K562 (cell line): ENCODE measurements at regions of chr19 and their contacts with region 1.

Region 1: DNA sequence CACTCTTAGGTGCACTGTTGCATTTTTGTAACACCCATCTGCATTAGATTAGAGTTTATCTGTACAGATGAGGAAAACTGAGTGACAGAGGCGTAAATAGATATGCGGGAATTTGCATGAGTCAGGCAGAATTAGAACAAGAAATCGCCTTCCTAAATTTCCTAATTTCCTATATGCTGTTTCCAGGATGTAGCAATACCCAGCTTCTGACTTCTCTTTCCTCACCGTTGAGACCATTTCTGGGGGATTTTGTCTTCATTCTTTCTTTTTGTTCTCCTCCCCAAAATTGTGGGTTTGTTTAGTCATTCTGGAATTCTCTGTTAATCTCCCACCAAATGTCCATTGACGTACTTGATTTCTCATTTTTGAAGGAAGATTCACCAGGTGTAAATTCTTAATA is 10.6 kb upstream of the ZNF792 start:
- DNase-seq: no peak
- ATAC-seq: no peak
- H3K4me3 ChIP-seq: no peak overlapping the region
- H3K27ac ChIP-seq: no peak overlapping the region
- H3K4me1 ChIP-seq: peaks cover 17 to 23% of the 10 kb centered on the region in 2 experiments; a peak in 3 of 5 replicates
- H3K27me3 ChIP-seq: no peaks in the 10 kb centered on the region
- CTCF ChIP-seq: no peak
- EP300 ChIP-seq: no peak
- POLR2A ChIP-seq: no peak
- RAD21 ChIP-seq: no peak

Region 2: DNA sequence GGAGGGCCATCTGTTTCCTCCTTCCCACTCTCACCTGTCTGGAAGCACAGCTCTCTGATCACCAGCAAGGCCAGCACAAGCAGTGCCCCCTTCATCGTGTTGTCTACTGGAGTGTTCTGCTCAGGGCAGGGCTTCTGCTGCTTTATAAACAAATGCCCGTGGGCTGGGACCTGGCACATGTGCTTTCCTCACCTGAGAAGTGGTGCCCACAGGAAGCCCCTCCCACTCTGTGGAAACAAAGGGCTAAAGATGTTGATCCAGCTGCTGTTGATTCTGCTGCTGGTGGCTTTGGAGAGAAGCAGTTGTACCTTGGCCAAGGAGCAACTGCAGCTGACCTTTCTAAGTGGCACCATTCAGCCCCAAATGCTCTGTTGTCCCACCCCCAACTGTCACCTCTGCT is 267.0 kb before region 1 on chr19:
- CTCF ChIA-PET with region 1: no interaction called
- POLR2A ChIA-PET with region 1: no interaction called
- in situ Hi-C with region 1: no loop called
- intact Hi-C with region 1: no loop called
- DNase-seq: no peak
- ATAC-seq: no peak
- H3K4me3 ChIP-seq: no peak overlapping the region
- H3K27ac ChIP-seq: no peak overlapping the region
- H3K4me1 ChIP-seq: no peaks in the 10 kb centered on the region; a peak in 1 of 5 replicates
- H3K27me3 ChIP-seq: 0 out of 5 replicates have a peak, but pooled peaks cover 0 to 4% of the 10 kb centered on the region in 2 experiments
- CTCF ChIP-seq: no peak
- EP300 ChIP-seq: no peak
- POLR2A ChIP-seq: no peak
- RAD21 ChIP-seq: no peak

Region 3: GRCh38 chr19:34838753-34839431 is 135.8 kb before region 1 on chr19:
- CTCF ChIA-PET with region 1: no interaction called
- POLR2A ChIA-PET with region 1: no interaction called
- in situ Hi-C with region 1: no loop called
- intact Hi-C with region 1: loop called (anchors 5 kb)
- DNase-seq: no peak
- ATAC-seq: peak; percentile 53; the same call in 2 of the 3 replicates
- H3K4me3 ChIP-seq: no peak overlapping the region
- H3K27ac ChIP-seq: no peak overlapping the region
- H3K4me1 ChIP-seq: peaks cover 8 to 10% of the 10 kb centered on the region in 2 experiments; a peak in 4 of 5 replicates
- H3K27me3 ChIP-seq: no peaks in the 10 kb centered on the region; a peak in 2 of 5 replicates
- CTCF ChIP-seq: no peak
- EP300 ChIP-seq: no peak
- POLR2A ChIP-seq: no peak
- RAD21 ChIP-seq: no peak

Region 4: GRCh38 chr19:34953092-34953491 is 21.6 kb before region 1 on chr19:
- CTCF ChIA-PET with region 1: no interaction called
- POLR2A ChIA-PET with region 1: no interaction called
- in situ Hi-C with region 1: no loop called
- intact Hi-C with region 1: no loop called
- DNase-seq: no peak
- ATAC-seq: no peak
- H3K4me3 ChIP-seq: no peak overlapping the region
- H3K27ac ChIP-seq: no peak overlapping the region
- H3K4me1 ChIP-seq: no peaks in the 10 kb centered on the region
- H3K27me3 ChIP-seq: no peaks in the 10 kb centered on the region
- CTCF ChIP-seq: no peak
- EP300 ChIP-seq: no peak
- POLR2A ChIP-seq: no peak
- RAD21 ChIP-seq: no peak

Region 5: DNA sequence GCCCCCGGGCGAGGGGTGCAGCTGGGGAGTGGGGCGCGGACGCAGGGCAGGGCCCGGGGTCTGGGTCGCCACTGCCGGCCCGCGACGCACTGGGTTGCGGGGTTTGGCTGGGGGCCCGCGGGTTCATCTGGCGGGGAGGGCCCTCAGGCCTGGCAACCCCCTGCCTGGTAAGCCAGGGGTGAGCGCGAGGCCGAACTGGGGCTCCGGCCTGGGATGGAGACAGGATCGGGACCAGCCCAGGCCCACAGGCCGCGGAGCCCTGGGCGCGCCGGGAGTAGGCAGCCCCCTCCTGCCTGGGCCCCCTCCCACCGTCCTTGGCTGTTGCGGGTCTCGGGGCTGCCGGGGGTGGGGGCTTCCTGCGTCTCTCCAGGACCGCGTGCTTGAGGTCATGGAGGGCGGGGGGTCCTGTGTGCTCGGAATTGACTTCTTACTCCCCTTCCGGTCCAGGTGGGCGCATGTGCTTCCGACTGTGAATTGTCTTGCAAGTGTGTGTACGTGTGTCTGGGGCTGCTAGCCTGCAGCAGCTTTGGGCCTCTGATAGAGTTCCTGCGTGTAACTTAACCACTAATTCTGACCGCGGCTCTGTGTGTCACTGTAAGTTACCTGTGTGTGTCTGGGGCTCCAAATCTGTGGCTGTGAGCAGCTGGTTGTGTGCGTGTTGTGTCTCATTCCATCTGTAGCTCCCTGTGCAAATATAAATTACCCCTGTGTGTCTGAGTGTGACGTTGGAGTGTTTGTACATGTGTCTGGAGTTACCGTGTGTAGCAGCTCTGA is 26.2 kb after region 1 on chr19:
- CTCF ChIA-PET with region 1: no interaction called
- POLR2A ChIA-PET with region 1: interaction called, 4 read pairs
- in situ Hi-C with region 1: no loop called
- intact Hi-C with region 1: loop called (anchors 1 kb)
- DNase-seq: peak; percentile 45 to 82 (median 74)
- ATAC-seq: peak; percentile 16
- H3K4me3 ChIP-seq: peak overlapping the region; percentile 77
- H3K27ac ChIP-seq: peak overlapping the region; percentile 80
- H3K4me1 ChIP-seq: peaks cover 27 to 54% of the 10 kb centered on the region in 2 experiments
- H3K27me3 ChIP-seq: no peaks in the 10 kb centered on the region
- CTCF ChIP-seq: no peak
- EP300 ChIP-seq: no peak
- POLR2A ChIP-seq: peak; percentile 41; the same call in 1 of the 2 replicates
- RAD21 ChIP-seq: no peak

Region 6: DNA sequence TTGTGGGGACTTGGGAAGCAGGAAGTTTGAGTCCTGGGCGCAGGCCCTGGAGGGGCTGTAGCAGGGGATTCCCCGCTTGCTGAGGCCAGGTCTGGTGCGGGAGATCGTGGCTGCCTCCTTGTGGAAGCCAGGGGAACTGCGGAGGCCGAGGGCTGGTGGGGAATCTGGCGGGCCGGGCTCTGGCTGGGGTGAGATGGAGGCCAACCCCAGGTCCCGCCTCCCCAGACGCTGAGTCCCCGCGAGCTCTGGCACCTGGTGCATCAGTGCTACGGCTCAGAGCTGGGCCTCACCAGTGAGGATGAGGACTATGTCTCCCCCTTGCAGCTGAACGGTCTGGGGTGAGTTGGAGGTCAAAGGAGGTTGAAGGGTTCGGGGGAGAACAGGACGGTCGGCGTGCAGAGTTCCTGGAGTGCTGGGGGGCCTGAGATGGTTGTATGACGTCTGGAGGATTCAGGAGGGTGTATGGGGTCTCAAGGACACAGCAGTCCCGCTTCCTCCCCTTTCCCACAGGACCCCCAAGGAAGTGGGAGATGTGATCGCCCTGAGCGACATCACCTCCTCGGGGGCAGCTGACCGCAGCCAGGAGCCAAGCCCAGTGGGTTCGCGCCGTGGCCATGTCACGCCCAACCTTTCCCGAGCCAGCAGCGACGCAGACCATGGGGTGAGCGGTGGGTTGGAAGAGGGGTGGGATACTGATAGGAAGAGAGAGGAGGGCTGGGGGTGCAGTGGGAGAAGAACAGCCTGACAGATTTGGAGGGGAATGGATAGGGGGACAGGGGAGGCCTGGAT is 38.6 kb after region 1 on chr19:
- CTCF ChIA-PET with region 1: interaction called, 28 read pairs
- POLR2A ChIA-PET with region 1: no interaction called
- in situ Hi-C with region 1: no loop called
- intact Hi-C with region 1: loop called (anchors 1 kb)
- DNase-seq: peak; percentile 65 to 78 (median 74)
- ATAC-seq: peak; percentile 89
- H3K4me3 ChIP-seq: no peak overlapping the region
- H3K27ac ChIP-seq: no peak overlapping the region
- H3K4me1 ChIP-seq: peaks cover 0 to 28% of the 10 kb centered on the region in 2 experiments; a peak in 2 of 5 replicates
- H3K27me3 ChIP-seq: no peaks in the 10 kb centered on the region
- CTCF ChIP-seq: peak; percentile 86 to 93 (median 89)
- EP300 ChIP-seq: no peak
- POLR2A ChIP-seq: 0 out of 2 replicates have a peak, but pooled peaks have one; percentile 37
- RAD21 ChIP-seq: peak; percentile 76 to 89

Region 7: GRCh38 chr19:35044317-35045117 is 69.9 kb after region 1 on chr19:
- CTCF ChIA-PET with region 1: no interaction called
- POLR2A ChIA-PET with region 1: no interaction called
- in situ Hi-C with region 1: no loop called
- intact Hi-C with region 1: loop called (anchors 2 kb)
- DNase-seq: peak; percentile 74 to 80 (median 77)
- ATAC-seq: no peak
- H3K4me3 ChIP-seq: no peak overlapping the region
- H3K27ac ChIP-seq: no peak overlapping the region
- H3K4me1 ChIP-seq: peaks cover 21 to 40% of the 10 kb centered on the region in 2 experiments
- H3K27me3 ChIP-seq: 0 out of 5 replicates have a peak, but pooled peaks cover 0 to 4% of the 10 kb centered on the region in 2 experiments
- CTCF ChIP-seq: peak; percentile 88 to 98 (median 89)
- EP300 ChIP-seq: no peak
- POLR2A ChIP-seq: no peak
- RAD21 ChIP-seq: peak; percentile 48 to 67

Region 8: GRCh38 chr19:35135389-35135909 is 160.8 kb after region 1 on chr19:
- CTCF ChIA-PET with region 1: interaction called, 8 read pairs
- POLR2A ChIA-PET with region 1: no interaction called
- in situ Hi-C with region 1: no loop called
- intact Hi-C with region 1: loop called (anchors 5 kb)
- DNase-seq: peak; percentile 86 to 93 (median 92)
- ATAC-seq: peak; percentile 98
- H3K4me3 ChIP-seq: no peak overlapping the region
- H3K27ac ChIP-seq: no peak overlapping the region
- H3K4me1 ChIP-seq: peaks cover 3 to 36% of the 10 kb centered on the region in 2 experiments; a peak in 3 of 5 replicates
- H3K27me3 ChIP-seq: peaks cover 2 to 28% of the 10 kb centered on the region in 2 experiments; a peak in 4 of 5 replicates
- CTCF ChIP-seq: peak; percentile 92 to 94 (median 92)
- EP300 ChIP-seq: no peak
- POLR2A ChIP-seq: no peak
- RAD21 ChIP-seq: peak; percentile 66 to 85